Natural killer cell (primary cell): ENCODE measurements at regions of chr11 and their contacts with region 1.

Region 1: GRCh38 chr11:130069684-130070108 is at the start of gene APLP2:
- DNase-seq: peak; percentile 97 to 98
- ATAC-seq: peak; percentile 88 to 98 (median 91)
- H3K4me3 ChIP-seq: peak within 1 kb of the TSS; percentile 82
- H3K4me3 Mint-ChIP-seq: peak within 1 kb of the TSS; percentile 98
- H3K27ac ChIP-seq: peak within 1 kb of the TSS; percentile 77
- H3K27ac Mint-ChIP-seq: peak within 1 kb of the TSS; percentile 91 to 98
- H3K4me1 ChIP-seq: peaks cover 11% of the 10 kb centered on the region
- H3K4me1 Mint-ChIP-seq: peaks cover 27 to 42% of the 10 kb centered on the region in 2 donors
- H3K27me3 ChIP-seq: no peaks in the 10 kb centered on the region
- H3K27me3 Mint-ChIP-seq: peaks cover 3% of the 10 kb centered on the region in 2 donors
- CTCF ChIP-seq: no peak
- total RNA-seq, gene APLP2: 99.8 to 119 (median 116) TPM

Region 2: GRCh38 chr11:129895126-129896041 is 174.3 kb before region 1 on chr11 and contains the start of gene NFRKB:
- intact Hi-C with region 1: loop called (anchors 10 kb)
- DNase-seq: peak; percentile 85 to 87
- ATAC-seq: peak; percentile 97 to 100 (median 97)
- H3K4me3 ChIP-seq: peak within 1 kb of the TSS; percentile 85
- H3K4me3 Mint-ChIP-seq: peak within 1 kb of the TSS; percentile 91
- H3K27ac ChIP-seq: peak within 1 kb of the TSS; percentile 34
- H3K27ac Mint-ChIP-seq: peak within 1 kb of the TSS; percentile 74 to 90
- H3K4me1 ChIP-seq: peaks cover 12% of the 10 kb centered on the region
- H3K4me1 Mint-ChIP-seq: peaks cover 25 to 34% of the 10 kb centered on the region in 2 donors
- H3K27me3 ChIP-seq: no peaks in the 10 kb centered on the region
- H3K27me3 Mint-ChIP-seq: no peaks in the 10 kb centered on the region
- CTCF ChIP-seq: no peak
- total RNA-seq, gene NFRKB: 26.9 to 36.3 (median 35.2) TPM

Region 3: GRCh38 chr11:129922674-129923073 is 147.0 kb before region 1 on chr11:
- intact Hi-C with region 1: loop called (anchors 10 kb)
- DNase-seq: no peak
- ATAC-seq: no peak
- H3K4me3 ChIP-seq: no peak overlapping the region
- H3K4me3 Mint-ChIP-seq: no peak overlapping the region
- H3K27ac ChIP-seq: no peak overlapping the region
- H3K27ac Mint-ChIP-seq: no peak overlapping the region
- H3K4me1 ChIP-seq: peaks cover 10% of the 10 kb centered on the region
- H3K4me1 Mint-ChIP-seq: peaks cover 5 to 6% of the 10 kb centered on the region in 2 donors
- H3K27me3 ChIP-seq: no peaks in the 10 kb centered on the region
- H3K27me3 Mint-ChIP-seq: no peaks in the 10 kb centered on the region
- CTCF ChIP-seq: no peak

Region 4: DNA sequence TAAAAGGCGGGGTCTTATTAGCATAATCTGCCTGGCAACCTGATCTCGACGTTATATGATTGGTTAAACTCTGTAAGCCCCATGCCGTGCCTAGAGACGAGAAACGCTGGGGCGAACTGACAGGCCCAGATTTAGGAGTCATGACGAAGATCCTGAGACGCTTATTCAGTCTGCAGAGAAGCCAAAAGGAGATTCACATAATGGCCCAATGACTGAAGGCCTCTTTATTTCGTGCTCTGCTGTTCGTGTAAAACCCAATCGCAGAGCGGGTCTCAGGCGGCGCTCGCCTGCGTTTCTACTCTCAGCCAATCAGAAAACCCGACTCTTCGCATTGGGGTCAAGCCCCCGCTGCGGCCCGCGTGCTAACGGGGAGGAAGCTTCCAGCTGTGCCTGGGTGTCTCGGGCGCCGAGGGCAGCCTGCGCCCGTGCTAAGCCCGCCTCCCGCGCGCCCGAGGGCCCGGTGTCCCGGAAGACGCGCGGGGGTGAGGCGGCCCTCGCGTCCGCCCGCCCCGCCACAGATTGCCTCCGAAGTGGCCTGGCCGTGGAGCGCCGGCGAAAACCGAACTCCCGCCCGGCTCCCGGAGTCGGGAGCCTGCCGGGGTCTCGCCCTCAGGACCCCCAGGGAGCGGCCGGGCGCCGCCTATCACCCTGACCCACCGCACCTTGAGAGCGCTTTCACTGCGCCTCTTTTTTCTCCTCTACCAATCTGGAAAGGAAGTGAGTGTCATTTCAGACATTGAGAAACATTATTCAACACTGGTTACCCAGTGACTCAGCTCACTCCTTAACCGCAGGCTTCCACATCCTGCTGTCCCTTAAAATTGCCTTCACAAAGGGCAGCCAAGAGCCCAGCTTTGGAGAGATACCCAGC is 66.6 kb before region 1 on chr11:
- intact Hi-C with region 1: loop called (anchors 1 kb)
- DNase-seq: peak; percentile 86 to 96
- ATAC-seq: peak; percentile 75 to 87 (median 75)
- H3K4me3 ChIP-seq: peak overlapping the region; percentile 65
- H3K4me3 Mint-ChIP-seq: peak overlapping the region; percentile 98
- H3K27ac ChIP-seq: peak overlapping the region; percentile 95
- H3K27ac Mint-ChIP-seq: peak overlapping the region; percentile 99 to 100
- H3K4me1 ChIP-seq: peaks cover 31% of the 10 kb centered on the region
- H3K4me1 Mint-ChIP-seq: peaks cover 33 to 37% of the 10 kb centered on the region in 2 donors
- H3K27me3 ChIP-seq: no peaks in the 10 kb centered on the region
- H3K27me3 Mint-ChIP-seq: peaks cover 0 to 4% of the 10 kb centered on the region in 2 donors
- CTCF ChIP-seq: no peak

Region 5: DNA sequence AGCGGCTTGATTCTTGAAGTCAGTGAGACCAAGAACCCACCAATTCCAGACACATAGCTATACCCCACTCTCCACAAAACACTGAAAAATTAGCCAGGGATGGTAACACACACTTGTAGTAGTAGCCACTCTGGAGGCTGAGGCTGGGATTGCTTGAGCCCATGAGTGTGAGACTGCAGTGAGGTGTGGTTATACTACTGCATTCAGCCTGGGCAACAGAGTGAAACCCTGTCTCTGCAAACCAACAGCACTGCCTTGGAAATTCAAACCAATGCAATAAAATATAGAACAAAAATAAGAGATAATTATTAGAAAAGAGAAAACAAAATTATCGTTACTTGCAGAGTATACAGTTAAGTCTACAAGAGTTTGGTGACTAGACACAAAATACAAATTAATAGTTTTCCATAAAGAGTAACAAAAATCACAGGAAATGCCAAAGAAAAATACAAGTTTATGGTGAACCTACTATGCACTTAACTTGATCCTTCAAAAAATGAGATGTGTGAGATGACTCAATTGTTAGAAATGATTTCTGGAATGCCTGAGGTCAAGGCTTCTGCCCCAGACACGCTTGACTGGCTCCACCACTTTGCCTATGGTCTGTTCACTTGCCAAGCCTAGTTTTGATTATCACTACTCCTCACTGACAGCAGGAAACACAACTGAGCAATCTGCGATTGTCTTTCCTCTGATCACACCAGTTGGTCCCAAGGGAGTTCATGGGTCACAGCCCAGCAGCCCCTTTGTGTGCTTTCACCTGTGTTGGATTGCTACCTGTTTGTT is 46.7 kb before region 1 on chr11:
- intact Hi-C with region 1: no loop called
- DNase-seq: no peak
- ATAC-seq: no peak
- H3K4me3 ChIP-seq: no peak overlapping the region
- H3K4me3 Mint-ChIP-seq: no peak overlapping the region
- H3K27ac ChIP-seq: no peak overlapping the region
- H3K27ac Mint-ChIP-seq: no peak overlapping the region
- H3K4me1 ChIP-seq: no peaks in the 10 kb centered on the region
- H3K4me1 Mint-ChIP-seq: no peaks in the 10 kb centered on the region
- H3K27me3 ChIP-seq: no peaks in the 10 kb centered on the region
- H3K27me3 Mint-ChIP-seq: peaks cover 3 to 14% of the 10 kb centered on the region in 2 donors
- CTCF ChIP-seq: no peak

Region 6: GRCh38 chr11:130042093-130042591 is 27.6 kb before region 1 on chr11:
- intact Hi-C with region 1: no loop called
- DNase-seq: peak in 1 of 2 donors; percentile 5
- ATAC-seq: peak in 2 of 3 donors; percentile 12 to 35
- H3K4me3 ChIP-seq: no peak overlapping the region
- H3K4me3 Mint-ChIP-seq: no peak overlapping the region
- H3K27ac ChIP-seq: no peak overlapping the region
- H3K27ac Mint-ChIP-seq: no peak overlapping the region
- H3K4me1 ChIP-seq: peaks cover 6% of the 10 kb centered on the region
- H3K4me1 Mint-ChIP-seq: peaks cover 9 to 11% of the 10 kb centered on the region in 2 donors
- H3K27me3 ChIP-seq: no peaks in the 10 kb centered on the region
- H3K27me3 Mint-ChIP-seq: peaks cover 9 to 16% of the 10 kb centered on the region in 2 donors
- CTCF ChIP-seq: no peak

Region 7: GRCh38 chr11:130118636-130119387 is 49.1 kb after region 1 on chr11:
- intact Hi-C with region 1: loop called (anchors 5 kb)
- DNase-seq: peak; percentile 18 to 65
- ATAC-seq: peak; percentile 77 to 93 (median 83)
- H3K4me3 ChIP-seq: no peak overlapping the region
- H3K4me3 Mint-ChIP-seq: peak overlapping the region; percentile 78
- H3K27ac ChIP-seq: peak overlapping the region; percentile 42
- H3K27ac Mint-ChIP-seq: peak overlapping the region; percentile 54 to 75
- H3K4me1 ChIP-seq: peaks cover 28% of the 10 kb centered on the region
- H3K4me1 Mint-ChIP-seq: peaks cover 37 to 43% of the 10 kb centered on the region in 2 donors
- H3K27me3 ChIP-seq: no peaks in the 10 kb centered on the region
- H3K27me3 Mint-ChIP-seq: no peaks in the 10 kb centered on the region
- CTCF ChIP-seq: no peak

Region 8: DNA sequence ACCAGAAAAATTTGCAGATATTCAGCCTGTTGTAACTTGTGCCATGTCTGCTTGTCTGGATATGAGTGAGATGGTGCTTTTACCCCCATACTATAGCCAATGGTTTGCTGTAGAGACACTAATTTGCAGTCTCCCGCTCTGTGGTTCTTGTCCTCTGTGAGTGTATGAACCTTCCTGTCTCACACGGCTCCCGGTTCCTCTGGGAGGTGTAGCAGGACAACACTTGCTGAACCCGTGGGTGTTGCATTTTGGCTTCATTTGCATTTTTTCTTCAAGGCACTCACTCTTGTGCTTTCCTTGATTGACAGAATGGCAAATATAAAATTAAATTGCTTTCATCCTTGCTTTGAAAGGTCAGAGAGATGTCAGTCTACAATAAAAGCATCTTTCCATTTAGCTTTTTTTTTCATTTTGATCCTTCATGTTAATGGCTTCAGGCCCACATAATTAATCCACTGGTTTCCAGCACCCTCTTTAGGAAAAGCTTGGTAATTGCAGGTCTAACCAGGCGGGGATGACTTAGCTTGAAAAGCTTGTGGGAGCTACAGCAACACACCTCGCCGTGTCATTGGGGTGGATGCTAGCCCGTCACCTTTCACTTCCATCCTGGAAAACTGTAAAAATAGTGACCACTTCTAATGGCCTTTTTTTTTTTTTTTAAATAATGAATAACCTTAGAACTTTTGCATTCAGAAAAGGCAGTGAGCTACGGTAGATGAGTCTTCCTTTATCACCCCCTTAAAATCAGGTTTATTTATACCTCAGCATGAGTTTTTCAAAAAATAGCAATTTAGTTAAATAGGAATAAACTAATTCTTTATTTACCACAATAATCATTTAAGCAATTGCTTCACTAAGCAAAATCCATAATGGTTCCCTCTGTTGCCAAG is 62.5 kb after region 1 on chr11:
- intact Hi-C with region 1: loop called (anchors 1 kb)
- DNase-seq: peak; percentile 28 to 80
- ATAC-seq: peak; percentile 82 to 97 (median 96)
- H3K4me3 ChIP-seq: no peak overlapping the region
- H3K4me3 Mint-ChIP-seq: no peak overlapping the region
- H3K27ac ChIP-seq: no peak overlapping the region
- H3K27ac Mint-ChIP-seq: no peak overlapping the region
- H3K4me1 ChIP-seq: no peaks in the 10 kb centered on the region
- H3K4me1 Mint-ChIP-seq: peaks cover 6 to 14% of the 10 kb centered on the region in 2 donors
- H3K27me3 ChIP-seq: no peaks in the 10 kb centered on the region
- H3K27me3 Mint-ChIP-seq: no peaks in the 10 kb centered on the region
- CTCF ChIP-seq: peak; percentile 91